Transverse colon (tissue), 4 donors: ENCODE measurements at regions of chr16 and their contacts with region 1.

Region 1: DNA sequence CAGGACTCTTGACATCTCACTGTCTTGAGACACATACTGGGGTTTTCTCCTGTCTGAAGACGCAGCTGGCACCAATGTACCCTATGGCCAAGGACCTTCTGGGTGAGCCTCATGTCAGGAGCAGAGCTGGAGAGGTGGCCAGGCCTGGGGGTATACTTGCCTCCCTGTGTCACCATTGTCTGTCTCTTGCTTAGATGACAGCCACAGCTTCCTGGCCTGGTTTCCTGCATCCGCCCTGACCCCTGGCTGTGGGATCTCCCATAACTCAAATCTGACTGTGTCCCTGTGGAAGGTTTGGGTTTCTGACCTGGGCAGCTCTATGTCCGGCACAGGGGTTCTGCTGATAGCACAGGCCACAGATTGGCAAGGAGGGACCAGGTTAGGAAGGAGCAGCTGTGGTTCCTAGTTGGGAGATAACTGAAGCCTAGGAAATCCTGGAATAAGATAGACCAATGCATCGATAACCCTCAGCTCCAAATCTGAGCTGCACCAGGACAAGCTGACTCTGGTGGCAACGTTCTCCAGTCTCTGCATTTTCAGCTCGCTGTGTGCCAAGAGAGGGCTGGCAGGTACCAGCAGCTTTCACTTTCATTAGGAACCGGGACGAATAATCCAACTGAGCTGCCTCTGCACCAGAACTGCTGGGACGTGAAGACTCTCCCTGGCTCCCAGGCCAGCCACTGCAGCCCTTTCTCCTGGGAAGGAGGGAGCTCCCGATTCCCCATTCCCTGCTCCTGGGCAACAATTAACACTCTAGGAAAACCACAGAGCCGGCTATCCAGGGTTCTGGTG is 5.0 kb downstream of the DEXI start:
- DNase-seq: no peak
- H3K4me3 ChIP-seq: peak overlapping the region in 1 of 4 donors; percentile 25
- H3K27ac ChIP-seq: peak overlapping the region; percentile 48 to 60 (median 50)
- H3K4me1 ChIP-seq: peaks cover 53 to 74% (median 64%) of the 10 kb centered on the region in 4 donors
- H3K27me3 ChIP-seq: no peaks in the 10 kb centered on the region
- CTCF ChIP-seq: no peak
- EP300 ChIP-seq: no peak
- POLR2A ChIP-seq: no peak

Region 2: GRCh38 chr16:10514369-10515055 is 422.8 kb before region 1 on chr16:
- in situ Hi-C with region 1: no loop called
- intact Hi-C with region 1: no loop called
- DNase-seq: peak; percentile 37
- H3K4me3 ChIP-seq: no peak overlapping the region
- H3K27ac ChIP-seq: no peak overlapping the region
- H3K4me1 ChIP-seq: peaks cover 0 to 11% (median 5%) of the 10 kb centered on the region in 4 donors
- H3K27me3 ChIP-seq: no peaks in the 10 kb centered on the region
- CTCF ChIP-seq: peak; percentile 59 to 77 (median 66)
- EP300 ChIP-seq: no peak
- POLR2A ChIP-seq: no peak

Region 3: GRCh38 chr16:10529895-10530669 is 407.2 kb before region 1 on chr16:
- in situ Hi-C with region 1: loop called in 1 of 4 experiments (anchors 5 kb)
- intact Hi-C with region 1: no loop called
- DNase-seq: no peak
- H3K4me3 ChIP-seq: no peak overlapping the region
- H3K27ac ChIP-seq: no peak overlapping the region
- H3K4me1 ChIP-seq: no peaks in the 10 kb centered on the region
- H3K27me3 ChIP-seq: no peaks in the 10 kb centered on the region
- CTCF ChIP-seq: no peak
- EP300 ChIP-seq: no peak
- POLR2A ChIP-seq: no peak

Region 4: GRCh38 chr16:10743610-10744393 is 193.5 kb before region 1 on chr16 and contains the start of gene NUBP1:
- in situ Hi-C with region 1: loop called in 1 of 4 experiments (anchors 10 kb)
- intact Hi-C with region 1: no loop called
- DNase-seq: peak; percentile 100
- H3K4me3 ChIP-seq: peak within 1 kb of the TSS; percentile 13 to 61 (median 52)
- H3K27ac ChIP-seq: peak within 1 kb of the TSS; percentile 88 to 98 (median 92)
- H3K4me1 ChIP-seq: peaks cover 5 to 24% (median 16%) of the 10 kb centered on the region in 4 donors
- H3K27me3 ChIP-seq: no peaks in the 10 kb centered on the region
- CTCF ChIP-seq: peak in 2 of 5 experiments; percentile 40 to 48
- EP300 ChIP-seq: no peak
- POLR2A ChIP-seq: peak; percentile 83
- total RNA-seq, gene NUBP1: 11.6 to 23.8 (median 22.5) TPM

Region 5: DNA sequence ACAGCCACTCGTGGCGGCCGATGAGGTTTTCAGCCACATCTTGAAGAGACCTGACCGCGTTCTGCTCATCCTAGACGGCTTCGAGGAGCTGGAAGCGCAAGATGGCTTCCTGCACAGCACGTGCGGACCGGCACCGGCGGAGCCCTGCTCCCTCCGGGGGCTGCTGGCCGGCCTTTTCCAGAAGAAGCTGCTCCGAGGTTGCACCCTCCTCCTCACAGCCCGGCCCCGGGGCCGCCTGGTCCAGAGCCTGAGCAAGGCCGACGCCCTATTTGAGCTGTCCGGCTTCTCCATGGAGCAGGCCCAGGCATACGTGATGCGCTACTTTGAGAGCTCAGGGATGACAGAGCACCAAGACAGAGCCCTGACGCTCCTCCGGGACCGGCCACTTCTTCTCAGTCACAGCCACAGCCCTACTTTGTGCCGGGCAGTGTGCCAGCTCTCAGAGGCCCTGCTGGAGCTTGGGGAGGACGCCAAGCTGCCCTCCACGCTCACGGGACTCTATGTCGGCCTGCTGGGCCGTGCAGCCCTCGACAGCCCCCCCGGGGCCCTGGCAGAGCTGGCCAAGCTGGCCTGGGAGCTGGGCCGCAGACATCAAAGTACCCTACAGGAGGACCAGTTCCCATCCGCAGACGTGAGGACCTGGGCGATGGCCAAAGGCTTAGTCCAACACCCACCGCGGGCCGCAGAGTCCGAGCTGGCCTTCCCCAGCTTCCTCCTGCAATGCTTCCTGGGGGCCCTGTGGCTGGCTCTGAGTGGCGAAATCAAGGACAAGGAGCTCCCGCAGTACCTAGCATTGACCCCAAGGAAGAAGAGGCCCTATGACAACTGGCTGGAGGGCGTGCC is 30.1 kb before region 1 on chr16:
- in situ Hi-C with region 1: no loop called
- intact Hi-C with region 1: loop called (anchors 1 kb)
- DNase-seq: no peak
- H3K4me3 ChIP-seq: no peak overlapping the region
- H3K27ac ChIP-seq: no peak overlapping the region
- H3K4me1 ChIP-seq: no peaks in the 10 kb centered on the region
- H3K27me3 ChIP-seq: no peaks in the 10 kb centered on the region
- CTCF ChIP-seq: no peak
- EP300 ChIP-seq: no peak
- POLR2A ChIP-seq: no peak

Region 6: DNA sequence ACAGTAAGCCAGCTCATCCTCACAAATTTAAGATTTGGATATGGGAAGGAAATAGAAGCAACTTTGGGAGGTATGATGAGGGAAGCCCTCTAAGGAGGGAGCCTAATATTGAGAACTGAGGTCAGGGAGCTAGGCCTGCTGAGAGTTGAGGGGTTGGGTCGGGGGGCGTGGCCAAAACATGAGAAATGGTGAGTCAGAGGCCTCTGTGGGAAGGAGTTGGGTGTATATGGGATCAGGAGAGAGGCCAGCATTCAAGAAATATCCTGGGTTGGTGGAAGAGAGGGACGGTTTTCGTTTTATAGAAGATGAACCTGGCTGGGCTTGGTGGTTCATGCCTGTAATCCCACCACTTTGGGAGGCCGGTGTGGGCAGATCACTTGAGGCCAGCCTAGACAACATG is 55.5 kb after region 1 on chr16:
- in situ Hi-C with region 1: no loop called
- intact Hi-C with region 1: no loop called
- DNase-seq: peak; percentile 25
- H3K4me3 ChIP-seq: no peak overlapping the region
- H3K27ac ChIP-seq: no peak overlapping the region
- H3K4me1 ChIP-seq: peaks cover 0 to 11% (median 2%) of the 10 kb centered on the region in 4 donors
- H3K27me3 ChIP-seq: no peaks in the 10 kb centered on the region
- CTCF ChIP-seq: no peak
- EP300 ChIP-seq: no peak
- POLR2A ChIP-seq: no peak